GM12878 (cell line): ENCODE measurements at regions of chr21 and their contacts with region 1.

Region 1: DNA sequence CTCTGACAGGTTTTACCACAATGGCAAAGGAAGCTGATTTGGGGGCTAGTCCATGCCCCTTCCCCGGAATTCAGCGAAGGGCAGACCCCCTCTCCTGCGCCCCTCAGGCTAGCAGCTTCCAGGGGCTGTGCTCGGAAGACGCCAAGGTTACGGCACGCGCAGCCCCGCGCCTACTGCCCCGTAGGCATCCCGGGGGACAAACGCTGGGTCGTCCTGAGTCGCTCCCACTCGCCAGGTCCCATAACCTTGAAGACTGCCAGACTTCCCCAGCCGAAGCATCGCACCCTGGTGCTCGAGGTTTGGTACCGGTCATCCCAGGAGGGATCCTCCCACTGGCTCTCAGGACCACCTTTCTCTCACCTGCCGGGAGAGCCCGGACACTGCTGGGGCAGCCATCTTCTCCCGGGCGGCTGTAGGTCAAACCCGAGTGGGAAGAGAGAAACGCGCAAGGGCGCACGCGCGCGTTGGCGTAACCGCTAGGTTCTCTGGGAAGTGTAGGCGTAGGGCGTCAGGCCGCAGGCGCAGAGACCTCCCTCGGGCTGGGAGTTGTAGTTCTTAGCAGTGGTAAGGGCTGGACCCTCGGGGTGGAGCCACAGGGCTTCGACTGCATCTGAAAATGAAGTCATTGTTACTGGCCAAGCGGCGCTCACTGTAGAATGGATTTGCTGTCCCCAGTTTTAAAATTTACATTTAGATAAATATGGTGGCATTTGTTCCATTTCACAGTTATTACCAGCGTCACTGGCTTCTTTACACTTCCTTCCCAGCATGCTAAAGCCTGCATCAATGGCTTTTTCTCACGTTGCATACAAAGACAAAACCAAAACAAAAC is at the start of gene ATP5PO:
- DNase-seq: peak; percentile 96
- ATAC-seq: peak; percentile 99
- H3K4me3 ChIP-seq: peak within 1 kb of the TSS; percentile 87
- H3K27ac ChIP-seq: peak within 1 kb of the TSS; percentile 95
- H3K4me1 ChIP-seq: peaks cover 4% of the 10 kb centered on the region; the same call in 1 of the 2 replicates
- H3K27me3 ChIP-seq: no peaks in the 10 kb centered on the region
- CTCF ChIP-seq: no peak
- EP300 ChIP-seq: no peak
- POLR2A ChIP-seq: peak; percentile 97
- RAD21 ChIP-seq: no peak
- polyA plus RNA-seq, gene ATP5PO: 1,461 to 1,656 TPM

Region 2: DNA sequence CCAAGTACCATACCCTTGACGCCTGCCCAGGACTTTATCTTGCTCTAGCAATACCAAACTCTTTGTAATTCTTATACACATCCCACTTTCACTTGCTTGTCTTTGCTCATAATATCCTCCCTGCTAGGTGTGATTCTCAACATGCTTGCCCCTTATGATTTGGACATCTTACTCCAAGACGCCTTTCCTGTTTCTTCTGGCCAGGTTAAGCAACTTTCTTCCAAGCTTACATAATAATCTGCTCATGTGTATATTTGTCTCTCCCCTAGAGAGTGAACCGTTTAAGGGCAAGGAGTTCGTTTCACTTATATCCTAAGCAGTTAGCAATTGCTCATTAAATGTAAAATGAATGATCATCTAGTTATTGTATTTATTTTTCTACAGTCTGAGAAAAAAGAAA is 295.9 kb before region 1 on chr21:
- CTCF ChIA-PET with region 1: no interaction called
- POLR2A ChIA-PET with region 1: no interaction called
- RAD21 ChIA-PET with region 1: no interaction called
- SMC1A ChIA-PET with region 1: no interaction called
- in situ Hi-C with region 1: no loop called
- intact Hi-C with region 1: no loop called
- DNase-seq: no peak
- ATAC-seq: no peak
- H3K4me3 ChIP-seq: no peak overlapping the region
- H3K27ac ChIP-seq: no peak overlapping the region
- H3K4me1 ChIP-seq: no peaks in the 10 kb centered on the region
- H3K27me3 ChIP-seq: no peaks in the 10 kb centered on the region
- CTCF ChIP-seq: no peak
- EP300 ChIP-seq: no peak
- POLR2A ChIP-seq: no peak
- RAD21 ChIP-seq: no peak

Region 3: DNA sequence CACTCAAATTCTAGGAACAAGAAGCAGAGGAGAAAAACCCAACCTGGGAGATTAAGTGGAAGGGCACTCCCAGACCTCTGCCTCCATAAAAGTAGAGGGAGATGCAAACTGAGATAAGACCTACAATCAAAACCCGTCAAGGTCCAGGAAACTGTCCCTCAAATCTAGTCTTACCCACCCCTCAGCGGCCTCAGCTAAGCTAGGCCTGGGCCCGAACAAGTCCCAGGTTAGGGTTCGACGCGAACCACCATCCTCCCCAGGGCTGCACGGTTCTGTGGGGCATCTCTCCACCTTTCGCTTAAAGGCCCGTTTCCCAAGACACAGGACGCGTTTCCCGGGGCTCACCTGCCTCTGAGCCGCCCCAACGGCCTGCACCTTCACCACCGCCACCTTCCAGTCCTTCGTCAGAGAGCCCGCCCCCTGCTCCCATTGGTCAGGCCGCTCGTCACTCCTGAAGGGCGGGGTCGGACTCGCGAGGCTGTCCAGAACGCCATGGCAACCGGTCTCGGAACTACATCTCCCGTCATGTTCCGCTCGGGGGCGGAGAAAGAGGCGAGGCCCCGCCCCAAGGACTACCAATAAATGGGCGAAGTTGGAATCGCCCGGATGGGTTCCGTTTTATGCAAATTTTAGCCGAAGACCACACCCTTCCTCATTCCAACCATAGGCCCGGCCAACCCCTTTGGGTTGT is 274.1 kb before region 1 on chr21 and contains the start of gene CRYZL1:
- CTCF ChIA-PET with region 1: no interaction called
- POLR2A ChIA-PET with region 1: no interaction called
- RAD21 ChIA-PET with region 1: no interaction called
- SMC1A ChIA-PET with region 1: no interaction called
- in situ Hi-C with region 1: no loop called
- intact Hi-C with region 1: loop called (anchors 2 kb)
- DNase-seq: peak; percentile 96
- ATAC-seq: peak; percentile 88
- H3K4me3 ChIP-seq: peak within 1 kb of the TSS; percentile 94
- H3K27ac ChIP-seq: peak within 1 kb of the TSS; percentile 91
- H3K4me1 ChIP-seq: no peaks in the 10 kb centered on the region
- H3K27me3 ChIP-seq: peaks cover 0 to 6% of the 10 kb centered on the region in 2 experiments; a peak in 2 of 4 replicates
- CTCF ChIP-seq: no peak
- EP300 ChIP-seq: no peak
- POLR2A ChIP-seq: peak; percentile 92
- RAD21 ChIP-seq: no peak
- polyA plus RNA-seq, gene CRYZL1: 51.4 to 72.4 TPM

Region 4: GRCh38 chr21:33894736-33895288 is 20.8 kb before region 1 on chr21:
- CTCF ChIA-PET with region 1: no interaction called
- POLR2A ChIA-PET with region 1: no interaction called
- RAD21 ChIA-PET with region 1: no interaction called
- SMC1A ChIA-PET with region 1: no interaction called
- in situ Hi-C with region 1: no loop called
- intact Hi-C with region 1: no loop called
- DNase-seq: no peak
- ATAC-seq: peak; percentile 94
- H3K4me3 ChIP-seq: no peak overlapping the region
- H3K27ac ChIP-seq: no peak overlapping the region
- H3K4me1 ChIP-seq: no peaks in the 10 kb centered on the region
- H3K27me3 ChIP-seq: no peaks in the 10 kb centered on the region
- CTCF ChIP-seq: peak; percentile 57 to 61 (median 59); a peak in 5 of 6 replicates
- EP300 ChIP-seq: no peak
- POLR2A ChIP-seq: no peak
- RAD21 ChIP-seq: peak; percentile 61